HEK293 (cell line): ENCODE measurements at regions of chr6 and their contacts with region 1.

Region 1: DNA sequence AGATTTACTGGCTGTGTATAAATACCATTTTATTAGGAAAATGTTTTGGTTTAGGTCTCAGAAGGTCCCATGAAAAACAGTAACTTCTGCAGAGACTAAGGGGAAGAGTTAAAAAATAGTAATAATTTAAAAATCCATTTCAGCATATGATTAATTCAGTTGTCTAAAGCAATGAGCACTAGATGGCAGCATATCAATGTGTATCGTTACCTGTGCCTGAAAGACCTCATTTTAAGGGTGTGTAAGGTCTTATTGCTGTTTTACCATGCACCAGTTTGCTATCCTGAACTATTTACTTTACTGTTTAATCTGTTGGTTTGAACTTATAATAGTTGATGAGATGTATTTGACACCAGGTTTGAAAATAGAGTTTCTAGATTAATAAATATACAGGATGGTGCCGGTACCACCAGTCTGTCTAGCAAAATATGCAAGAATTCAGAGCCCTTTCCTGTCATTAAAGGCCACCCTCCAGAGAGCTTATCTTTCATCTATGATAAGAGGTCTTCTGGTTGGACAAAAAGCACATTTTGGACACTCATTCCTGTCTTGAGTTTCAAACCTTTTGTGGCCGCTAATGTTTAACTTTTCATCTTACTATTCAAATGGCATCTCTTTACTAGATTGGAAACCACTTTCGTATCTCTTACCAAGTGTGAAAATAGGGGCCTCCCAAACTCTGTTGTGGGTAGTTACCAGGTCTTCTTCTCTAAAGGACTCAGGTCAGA is 8.9 kb upstream of the AHI1 start:
- H3K4me3 ChIP-seq: no peak overlapping the region
- H3K27ac ChIP-seq: no peak overlapping the region
- H3K4me1 ChIP-seq: peaks cover 3% of the 10 kb centered on the region; the same call in 1 of the 2 replicates
- CTCF ChIP-seq: 0 out of 2 replicates have a peak, but pooled peaks have one; percentile 13

Region 2: GRCh38 chr6:135520781-135521180 is 14.3 kb after region 1 on chr6:
- CTCF ChIA-PET with region 1: interaction called, 19 read pairs
- POLR2A ChIA-PET with region 1: no interaction called
- H3K4me3 ChIP-seq: no peak overlapping the region
- H3K27ac ChIP-seq: no peak overlapping the region
- H3K4me1 ChIP-seq: no peaks in the 10 kb centered on the region
- CTCF ChIP-seq: no peak

Region 3: DNA sequence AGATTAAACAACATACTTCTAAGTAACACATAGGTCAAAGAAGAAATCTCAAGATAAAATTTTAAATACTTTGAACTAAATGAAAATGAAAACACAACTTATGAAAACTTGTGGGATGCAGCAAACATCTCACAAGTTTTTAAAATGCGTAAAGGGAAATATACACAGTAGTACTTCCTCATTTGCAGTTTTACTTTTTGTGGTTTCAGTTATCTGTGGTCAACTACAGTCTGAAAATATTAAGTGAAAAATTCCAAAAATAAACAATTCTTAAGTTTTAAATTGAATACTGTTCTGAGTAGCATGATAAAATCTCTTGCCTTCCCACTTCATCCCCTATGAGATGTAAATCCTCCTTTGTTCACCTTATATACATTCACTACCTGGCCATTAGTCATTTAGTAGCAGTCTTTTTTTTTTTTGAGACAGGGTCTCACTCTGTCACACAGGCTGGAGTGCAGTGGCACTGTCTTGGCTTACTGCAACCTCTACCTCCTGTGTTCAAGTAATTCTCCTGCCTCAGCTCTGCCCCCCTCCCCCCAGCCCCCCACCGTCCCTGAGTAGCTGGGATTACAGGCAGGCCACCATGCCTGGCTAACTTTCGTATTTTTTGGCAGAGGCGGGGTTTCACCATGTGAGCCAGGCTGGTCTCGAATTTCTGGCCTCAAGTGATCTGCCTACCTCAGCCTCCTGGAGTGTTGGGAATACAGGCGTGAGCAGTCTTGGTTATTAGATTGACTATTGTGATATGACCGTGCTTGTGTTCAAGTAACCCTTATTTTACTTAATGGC is 145.7 kb after region 1 on chr6:
- CTCF ChIA-PET with region 1: no interaction called
- POLR2A ChIA-PET with region 1: no interaction called
- H3K4me3 ChIP-seq: no peak overlapping the region
- H3K27ac ChIP-seq: no peak overlapping the region
- H3K4me1 ChIP-seq: no peaks in the 10 kb centered on the region
- CTCF ChIP-seq: no peak

Region 4: GRCh38 chr6:135722679-135723078 is 216.2 kb after region 1 on chr6:
- CTCF ChIA-PET with region 1: no interaction called
- POLR2A ChIA-PET with region 1: no interaction called
- H3K4me3 ChIP-seq: no peak overlapping the region
- H3K27ac ChIP-seq: no peak overlapping the region
- H3K4me1 ChIP-seq: no peaks in the 10 kb centered on the region
- CTCF ChIP-seq: no peak